ENCODE measurements at regions of chr7 and their contacts with region 1.

Region 1: DNA sequence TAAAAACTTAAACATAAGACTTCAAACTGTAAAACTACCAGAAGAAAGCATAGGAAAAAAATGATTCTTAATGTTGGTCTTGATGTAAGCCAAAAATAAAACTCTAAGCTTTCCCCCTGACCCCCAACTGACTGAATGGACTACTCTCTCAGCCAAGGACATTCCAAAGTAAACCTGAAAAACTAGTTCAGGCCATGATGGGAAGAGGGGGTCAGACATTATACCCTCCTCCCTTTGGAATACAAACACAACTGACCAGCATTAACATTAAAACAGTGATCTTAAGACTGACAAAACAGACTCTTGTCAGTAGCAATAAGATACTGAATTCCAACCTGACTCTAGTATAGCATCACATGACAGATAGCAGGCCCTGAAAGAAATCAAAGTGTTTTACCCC is 13.5 kb upstream of the LRGUK start:
- DNase-seq: no peak
- ATAC-seq: no peak
- H3K4me3 ChIP-seq: no peak overlapping the region
- H3K27ac ChIP-seq: no peak overlapping the region
- H3K4me1 ChIP-seq: no peaks in the 10 kb centered on the region
- H3K27me3 ChIP-seq: no peaks in the 10 kb centered on the region
- CTCF ChIP-seq: no peak

Region 2: GRCh38 chr7:133742709-133743538 is 370.7 kb before region 1 on chr7:
- CTCF ChIA-PET with region 1: no interaction called
- POLR2A ChIA-PET with region 1: no interaction called
- intact Hi-C with region 1: no loop called
- DNase-seq: peak; percentile 42
- ATAC-seq: peak; percentile 44; the same call in 1 of the 2 replicates
- H3K4me3 ChIP-seq: no peak overlapping the region
- H3K27ac ChIP-seq: no peak overlapping the region
- H3K4me1 ChIP-seq: peaks cover 5% of the 10 kb centered on the region; the same call in 1 of the 2 replicates
- H3K27me3 ChIP-seq: no peaks in the 10 kb centered on the region
- CTCF ChIP-seq: peak; percentile 77

Region 3: GRCh38 chr7:134101716-134102115 is 11.9 kb before region 1 on chr7:
- CTCF ChIA-PET with region 1: no interaction called
- POLR2A ChIA-PET with region 1: no interaction called
- intact Hi-C with region 1: loop called (anchors 1 kb)
- DNase-seq: no peak
- ATAC-seq: no peak
- H3K4me3 ChIP-seq: no peak overlapping the region
- H3K27ac ChIP-seq: no peak overlapping the region
- H3K4me1 ChIP-seq: no peaks in the 10 kb centered on the region
- H3K27me3 ChIP-seq: no peaks in the 10 kb centered on the region
- CTCF ChIP-seq: no peak